Mammary epithelial cell (primary cell): ENCODE measurements at regions of chr18 and their contacts with region 1.

Region 1: DNA sequence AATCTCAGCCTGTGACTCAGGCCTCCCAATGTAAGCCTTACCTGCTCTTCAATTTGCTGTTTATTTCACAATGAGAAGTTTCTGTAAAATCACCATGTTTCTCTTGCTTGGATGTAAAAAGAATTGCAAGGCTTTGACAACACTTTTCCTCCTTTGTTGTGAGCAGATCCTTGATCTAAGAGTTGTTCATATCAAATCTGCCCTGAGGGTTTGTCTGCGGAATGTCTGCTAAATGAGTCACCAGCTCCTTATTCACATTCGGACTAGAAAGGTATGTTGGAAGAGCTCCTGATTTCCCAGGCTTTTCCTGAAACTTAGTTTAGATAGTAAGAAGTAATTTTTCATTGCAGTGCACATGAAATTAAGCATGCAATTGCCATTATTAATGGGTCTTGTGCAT is 268.2 kb upstream of the TCF4 start:
- DNase-seq: peak; percentile 95
- H3K4me3 ChIP-seq: no peak overlapping the region
- H3K27ac ChIP-seq: peak overlapping the region; percentile 60
- H3K4me1 ChIP-seq: peaks cover 25% of the 10 kb centered on the region
- H3K27me3 ChIP-seq: no peaks in the 10 kb centered on the region
- CTCF ChIP-seq: no peak

Region 2: GRCh38 chr18:55415258-55415871 is 440.9 kb before region 1 on chr18:
- CTCF ChIA-PET with region 1: no interaction called
- dilution Hi-C with region 1: no loop called
- in situ Hi-C with region 1: loop called in 1 of 2 experiments (anchors 10 kb)
- intact Hi-C with region 1: loop called (anchors 1 kb)
- DNase-seq: peak; percentile 43
- H3K4me3 ChIP-seq: no peak overlapping the region
- H3K27ac ChIP-seq: no peak overlapping the region
- H3K4me1 ChIP-seq: no peaks in the 10 kb centered on the region
- H3K27me3 ChIP-seq: no peaks in the 10 kb centered on the region
- CTCF ChIP-seq: peak; percentile 85 to 90

Region 3: GRCh38 chr18:55589625-55590291 is 266.5 kb before region 1 on chr18:
- CTCF ChIA-PET with region 1: no interaction called
- dilution Hi-C with region 1: no loop called
- in situ Hi-C with region 1: no loop called
- intact Hi-C with region 1: loop called (anchors 2 kb)
- DNase-seq: peak; percentile 91
- H3K4me3 ChIP-seq: peak overlapping the region; percentile 56 to 82 (median 65)
- H3K27ac ChIP-seq: peak overlapping the region; percentile 52
- H3K4me1 ChIP-seq: peaks cover 10% of the 10 kb centered on the region
- H3K27me3 ChIP-seq: no peaks in the 10 kb centered on the region
- CTCF ChIP-seq: no peak

Region 4: DNA sequence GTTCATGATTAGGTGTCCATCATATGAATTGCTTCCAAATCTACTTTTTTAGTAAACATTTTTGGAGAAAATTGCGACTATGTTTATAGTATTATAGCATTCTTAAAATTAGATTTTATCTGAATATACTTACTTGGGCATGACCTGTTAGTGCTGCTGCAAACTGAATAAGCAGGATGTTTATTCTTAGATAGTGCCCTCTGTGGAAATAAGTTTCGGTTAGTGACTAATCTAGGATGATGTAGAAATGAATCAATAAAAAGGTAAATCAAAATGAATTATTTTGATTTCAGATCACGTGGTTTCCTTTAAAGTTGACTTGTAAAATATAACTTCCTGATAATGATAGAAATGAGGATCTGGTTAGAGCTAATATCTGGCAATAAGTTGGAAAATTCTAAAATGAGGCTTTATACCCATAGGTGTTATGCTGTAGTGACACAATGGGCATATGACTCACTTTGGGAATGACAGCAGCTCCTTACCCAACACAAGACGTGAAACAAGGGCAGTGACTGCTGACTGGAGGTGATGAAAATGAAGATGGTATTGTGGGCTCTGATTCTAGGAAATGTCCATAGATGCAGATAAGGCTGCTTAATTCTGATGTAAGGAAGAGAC is 102.5 kb before region 1 on chr18:
- CTCF ChIA-PET with region 1: no interaction called
- dilution Hi-C with region 1: no loop called
- in situ Hi-C with region 1: no loop called
- intact Hi-C with region 1: no loop called
- DNase-seq: peak; percentile 88
- H3K4me3 ChIP-seq: no peak overlapping the region
- H3K27ac ChIP-seq: peak overlapping the region; percentile 85
- H3K4me1 ChIP-seq: peaks cover 9% of the 10 kb centered on the region
- H3K27me3 ChIP-seq: no peaks in the 10 kb centered on the region
- CTCF ChIP-seq: no peak

Region 5: DNA sequence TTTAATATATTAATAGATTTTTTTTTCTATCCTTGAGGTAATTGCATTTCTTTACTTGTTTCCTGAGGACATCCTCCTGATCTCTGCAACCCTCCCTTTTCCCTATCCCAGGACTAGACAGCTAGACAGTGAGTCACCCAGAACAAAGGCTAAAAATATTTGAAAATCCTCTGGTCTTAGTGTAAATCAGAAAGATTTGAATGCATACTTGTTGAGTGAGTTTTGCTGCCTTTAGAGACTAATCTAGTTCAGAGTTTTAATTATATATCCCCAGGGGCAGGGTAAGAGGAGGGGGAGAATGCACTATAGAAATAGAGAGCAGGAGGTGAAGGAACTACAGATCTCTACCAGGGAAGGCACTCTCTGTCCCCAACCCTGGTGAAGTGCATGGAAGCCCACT is 65.9 kb before region 1 on chr18:
- CTCF ChIA-PET with region 1: no interaction called
- dilution Hi-C with region 1: loop called (anchors 5 kb)
- in situ Hi-C with region 1: no loop called
- intact Hi-C with region 1: loop called (anchors 2 kb)
- DNase-seq: peak; percentile 72
- H3K4me3 ChIP-seq: no peak overlapping the region
- H3K27ac ChIP-seq: no peak overlapping the region
- H3K4me1 ChIP-seq: peaks cover 17% of the 10 kb centered on the region
- H3K27me3 ChIP-seq: no peaks in the 10 kb centered on the region
- CTCF ChIP-seq: no peak

Region 6: GRCh38 chr18:55833543-55833942 is 22.7 kb before region 1 on chr18:
- CTCF ChIA-PET with region 1: no interaction called
- dilution Hi-C with region 1: no loop called
- in situ Hi-C with region 1: no loop called
- intact Hi-C with region 1: loop called (anchors 1 kb)
- DNase-seq: peak; percentile 96
- H3K4me3 ChIP-seq: no peak overlapping the region
- H3K27ac ChIP-seq: peak overlapping the region; percentile 50
- H3K4me1 ChIP-seq: peaks cover 16% of the 10 kb centered on the region
- H3K27me3 ChIP-seq: no peaks in the 10 kb centered on the region
- CTCF ChIP-seq: no peak

Region 7: DNA sequence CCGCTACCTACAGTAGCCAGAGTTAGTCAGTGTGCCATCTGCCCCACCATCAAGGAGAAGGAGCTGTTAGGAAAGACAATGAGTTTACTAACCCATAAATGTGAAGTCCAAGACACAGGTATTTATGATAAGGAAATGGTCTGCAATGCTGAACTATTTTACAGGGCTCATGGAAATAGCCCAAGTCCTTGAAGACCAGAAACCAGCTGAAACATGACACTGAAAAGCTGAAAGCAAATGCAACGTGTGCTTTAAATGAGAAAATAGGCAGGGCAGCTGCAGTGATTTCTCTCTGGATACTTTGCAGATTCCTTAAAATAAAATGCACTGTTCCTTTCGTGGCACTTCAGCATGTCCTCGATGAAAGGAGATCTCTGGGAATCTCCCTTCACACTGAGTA is 11.8 kb before region 1 on chr18:
- CTCF ChIA-PET with region 1: no interaction called
- dilution Hi-C with region 1: no loop called
- in situ Hi-C with region 1: no loop called
- intact Hi-C with region 1: no loop called
- DNase-seq: no peak
- H3K4me3 ChIP-seq: no peak overlapping the region
- H3K27ac ChIP-seq: no peak overlapping the region
- H3K4me1 ChIP-seq: peaks cover 6% of the 10 kb centered on the region
- H3K27me3 ChIP-seq: no peaks in the 10 kb centered on the region
- CTCF ChIP-seq: no peak